Common myeloid progenitor, CD34-positive (primary cell): ENCODE measurements at regions of chr12 and their contacts with region 1.

Region 1: GRCh38 chr12:117367011-117367638 is 5.7 kb upstream of the NOS1 start:
- DNase-seq: peak; percentile 44 to 66 (median 50)
- H3K4me3 ChIP-seq: no peak overlapping the region
- H3K27ac ChIP-seq: no peak overlapping the region
- H3K4me1 ChIP-seq: no peaks in the 10 kb centered on the region
- H3K27me3 ChIP-seq: peaks cover 0 to 47% (median 17%) of the 10 kb centered on the region in 5 experiments

Region 2: GRCh38 chr12:117377744-117378143 is 10.6 kb after region 1 on chr12:
- CTCF ChIA-PET with region 1: interaction called, 11 read pairs
- POLR2A ChIA-PET with region 1: no interaction called
- DNase-seq: no peak
- H3K4me3 ChIP-seq: no peak overlapping the region
- H3K27ac ChIP-seq: no peak overlapping the region
- H3K4me1 ChIP-seq: no peaks in the 10 kb centered on the region
- H3K27me3 ChIP-seq: no peaks in the 10 kb centered on the region

Region 3: DNA sequence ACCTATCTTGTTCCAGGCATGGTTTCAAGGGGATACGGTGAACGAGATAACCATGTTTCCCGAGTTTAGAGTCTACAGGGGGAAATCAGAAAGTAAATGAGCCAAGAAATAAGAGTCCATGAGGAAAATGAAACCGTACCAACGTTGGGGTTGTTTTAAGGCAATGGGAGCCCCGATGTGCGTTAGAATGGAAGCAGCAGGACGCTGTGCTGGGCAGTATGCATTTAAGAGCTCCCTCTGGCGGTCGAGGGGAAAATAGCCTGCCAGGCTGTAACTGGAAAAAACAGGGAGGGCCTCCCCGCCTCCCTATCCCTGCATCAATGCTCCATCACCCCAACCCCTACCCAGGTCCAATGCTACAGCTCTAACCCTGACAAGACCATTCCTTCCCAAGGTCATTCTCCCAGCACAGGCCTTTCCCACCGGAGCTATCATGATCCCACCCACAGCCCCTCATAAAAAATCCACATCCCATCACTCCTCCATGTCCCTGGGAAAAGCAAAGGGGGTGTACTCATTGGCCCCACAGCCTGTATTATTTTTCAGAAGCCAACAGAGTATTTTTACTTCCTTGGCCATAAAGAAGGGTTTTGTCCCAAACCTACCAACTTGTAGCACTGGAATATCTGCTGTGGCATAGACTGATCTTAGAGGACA is 220.6 kb after region 1 on chr12:
- CTCF ChIA-PET with region 1: interaction called, 20 read pairs
- POLR2A ChIA-PET with region 1: no interaction called
- DNase-seq: peak; percentile 12 to 40 (median 33)
- H3K4me3 ChIP-seq: no peak overlapping the region
- H3K27ac ChIP-seq: no peak overlapping the region
- H3K4me1 ChIP-seq: no peaks in the 10 kb centered on the region
- H3K27me3 ChIP-seq: peaks cover 2 to 29% (median 21%) of the 10 kb centered on the region in 5 experiments

Region 4: GRCh38 chr12:117836999-117837736 is 470.0 kb after region 1 on chr12:
- CTCF ChIA-PET with region 1: interaction called, 15 read pairs
- POLR2A ChIA-PET with region 1: no interaction called
- DNase-seq: peak; percentile 51 to 77 (median 72)
- H3K4me3 ChIP-seq: no peak overlapping the region
- H3K27ac ChIP-seq: no peak overlapping the region
- H3K4me1 ChIP-seq: no peaks in the 10 kb centered on the region
- H3K27me3 ChIP-seq: peaks cover 0 to 29% (median 3%) of the 10 kb centered on the region in 5 experiments